ENCODE measurements at regions of chr5 and their contacts with region 1.

Region 1: DNA sequence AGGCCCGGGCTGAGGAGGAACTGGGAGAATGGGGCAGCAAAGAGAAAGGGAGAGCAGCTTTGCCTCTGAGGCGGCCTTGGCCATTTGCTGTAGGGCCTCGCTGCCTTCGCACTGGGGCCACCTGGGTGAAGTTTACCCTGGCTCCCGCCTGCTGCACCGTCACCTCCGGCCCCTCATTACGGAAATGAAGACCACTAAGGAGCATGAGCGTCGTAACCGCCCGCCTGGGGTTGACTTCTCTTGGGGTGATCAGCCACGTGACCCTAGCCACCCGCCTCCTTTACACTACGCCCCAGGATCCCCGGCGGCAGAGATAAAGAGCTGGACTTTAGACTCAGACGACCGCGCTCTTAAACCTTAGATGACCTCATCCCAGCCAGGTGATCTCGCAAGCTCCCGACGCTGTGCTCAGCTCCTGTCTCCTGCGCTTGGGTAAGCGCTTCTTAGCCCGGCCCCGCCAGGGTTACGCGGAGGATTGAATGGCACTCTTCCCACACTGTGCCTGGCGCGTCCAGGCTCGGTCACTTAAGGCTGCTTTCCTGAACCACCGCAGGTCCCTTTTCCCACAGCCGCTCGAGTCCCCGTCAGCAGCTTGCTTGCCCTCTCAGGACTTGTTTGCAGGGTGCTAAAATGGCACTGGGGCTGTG is 107.9 kb upstream of the LARP1 start:
- DNase-seq: no peak
- CTCF ChIP-seq: no peak

Region 2: DNA sequence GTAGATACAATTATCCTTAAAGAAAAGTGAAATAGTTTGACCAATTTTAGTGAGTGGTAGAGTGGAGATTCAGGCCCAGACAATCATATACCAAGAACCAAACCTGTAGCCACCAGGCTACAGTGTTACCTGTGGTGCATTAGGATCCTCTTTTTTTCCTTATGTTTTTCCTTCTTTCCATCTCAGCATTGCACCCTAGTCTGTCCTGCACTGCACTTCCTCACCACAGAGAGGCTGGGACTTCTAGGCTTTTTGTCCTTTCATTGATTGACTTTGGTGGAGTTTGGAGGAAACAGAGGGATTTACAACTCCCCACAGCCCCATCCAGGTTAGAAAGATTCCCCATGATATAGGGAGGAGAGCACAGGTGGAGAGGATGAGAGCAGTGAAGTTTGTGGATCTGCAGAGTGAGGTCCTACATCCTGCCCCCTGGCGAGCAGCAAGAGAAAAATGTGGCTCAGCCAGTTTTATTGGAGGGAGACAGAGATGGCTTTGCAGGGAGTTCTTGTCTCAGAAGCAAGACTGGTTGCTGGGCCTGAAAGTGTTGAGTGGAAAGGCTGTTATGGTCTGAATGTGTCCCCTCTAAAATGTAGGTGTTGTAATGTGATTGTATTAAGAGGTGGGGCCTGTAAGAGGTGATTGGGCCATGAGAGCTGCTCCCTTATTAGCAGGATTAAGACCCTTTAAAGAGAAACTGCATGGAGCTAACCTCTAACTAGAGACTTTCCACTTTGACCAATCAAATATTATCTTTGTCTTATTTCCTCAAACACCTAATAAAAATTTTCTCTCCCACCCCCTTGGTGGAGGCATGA is 402.5 kb after region 1 on chr5:
- in situ Hi-C with region 1: loop called (anchors 25 kb)
- DNase-seq: no peak
- CTCF ChIP-seq: peak; percentile 53

Measured in GM13977 (cell line).